Caco-2 (cell line): ENCODE measurements at regions of chr2 and their contacts with region 1.

Region 1: GRCh38 chr2:169452080-169452479 is 27.2 kb upstream of the BBS5 start:
- DNase-seq: peak in 1 of 2 experiments; percentile 47
- H3K4me3 ChIP-seq: no peak overlapping the region
- H3K4me3 Mint-ChIP-seq: no peak overlapping the region
- H3K27ac Mint-ChIP-seq: no peak overlapping the region
- H3K4me1 ChIP-seq: no peaks in the 10 kb centered on the region
- H3K4me1 Mint-ChIP-seq: no peaks in the 10 kb centered on the region
- H3K27me3 ChIP-seq: no peaks in the 10 kb centered on the region
- H3K27me3 Mint-ChIP-seq: no peaks in the 10 kb centered on the region
- CTCF ChIP-seq: peak; percentile 54 to 61

Region 2: DNA sequence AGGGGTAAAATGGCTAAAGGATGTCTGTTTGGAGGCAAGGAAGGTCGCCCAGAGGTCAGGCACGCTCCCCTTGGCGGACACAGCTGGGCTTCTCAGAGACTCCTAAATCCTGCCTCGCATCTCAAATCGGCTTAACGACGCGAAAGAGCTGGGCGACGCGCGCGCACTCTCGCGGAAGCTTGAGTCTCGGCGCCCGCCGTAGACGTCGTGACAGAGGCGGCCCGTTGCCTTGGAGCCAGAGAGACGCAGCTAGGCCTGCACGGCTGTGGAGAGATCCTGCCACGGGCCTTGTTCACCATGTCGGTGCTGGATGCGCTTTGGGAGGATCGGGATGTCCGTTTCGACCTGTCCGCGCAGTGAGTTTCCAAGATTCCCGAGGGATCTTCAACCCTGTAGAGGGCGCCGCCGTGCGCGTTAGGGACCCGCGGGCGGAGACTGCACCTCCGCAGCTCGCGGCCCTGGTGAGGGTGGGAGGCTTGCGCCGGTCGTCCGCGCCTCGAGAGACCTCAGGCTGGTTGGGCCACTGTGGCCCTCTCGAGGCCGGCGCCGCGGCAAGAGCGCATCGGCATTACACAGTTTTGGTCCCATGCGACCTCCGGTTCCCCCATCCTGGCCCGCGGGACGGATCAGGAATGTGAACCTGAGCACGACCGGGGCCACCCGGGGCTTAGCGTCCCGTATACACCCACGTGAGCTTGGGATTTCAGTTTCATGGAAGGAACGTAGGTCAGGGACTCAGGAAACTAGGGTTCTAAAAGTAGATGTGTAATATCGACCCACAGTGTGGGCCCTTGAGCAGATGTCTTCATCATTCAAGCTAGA is 27.4 kb after region 1 on chr2 and contains the start of gene BBS5:
- CTCF ChIA-PET with region 1: no interaction called
- POLR2A ChIA-PET with region 1: no interaction called
- intact Hi-C with region 1: no loop called
- DNase-seq: peak; percentile 77 to 85
- H3K4me3 ChIP-seq: peak within 1 kb of the TSS; percentile 77
- H3K4me3 Mint-ChIP-seq: peak within 1 kb of the TSS; percentile 63
- H3K27ac Mint-ChIP-seq: peak within 1 kb of the TSS; percentile 60
- H3K4me1 ChIP-seq: no peaks in the 10 kb centered on the region; the same call in 1 of the 2 replicates
- H3K4me1 Mint-ChIP-seq: peaks cover 12% of the 10 kb centered on the region
- H3K27me3 ChIP-seq: no peaks in the 10 kb centered on the region
- H3K27me3 Mint-ChIP-seq: no peaks in the 10 kb centered on the region
- CTCF ChIP-seq: peak; percentile 76 to 78
- total RNA-seq, gene BBS5: 2.1 and 3.2 TPM in 2 replicates

Region 3: DNA sequence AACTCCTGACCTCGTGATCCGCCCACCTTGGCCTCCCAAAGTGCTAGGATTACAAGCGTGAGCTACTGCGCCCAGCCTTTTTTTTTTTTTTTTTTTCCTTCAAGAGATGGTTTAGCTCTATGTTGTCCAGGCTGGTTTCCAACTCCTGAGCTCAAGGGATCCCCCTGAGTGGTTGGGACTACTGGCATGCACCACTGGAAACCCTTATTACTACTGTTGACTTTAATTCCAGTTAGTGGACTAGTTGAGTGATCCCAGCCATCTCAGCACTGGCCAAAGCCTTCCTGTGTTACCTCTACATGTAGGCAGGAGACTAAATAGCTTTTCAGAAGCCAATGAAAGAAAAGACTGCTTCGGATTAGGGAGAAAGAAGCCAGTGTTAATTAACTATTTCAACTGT is 338.5 kb after region 1 on chr2:
- CTCF ChIA-PET with region 1: no interaction called
- POLR2A ChIA-PET with region 1: no interaction called
- intact Hi-C with region 1: loop called (anchors 2 kb)
- DNase-seq: no peak
- H3K4me3 ChIP-seq: no peak overlapping the region
- H3K4me3 Mint-ChIP-seq: no peak overlapping the region
- H3K27ac Mint-ChIP-seq: no peak overlapping the region
- H3K4me1 ChIP-seq: no peaks in the 10 kb centered on the region
- H3K4me1 Mint-ChIP-seq: no peaks in the 10 kb centered on the region
- H3K27me3 ChIP-seq: no peaks in the 10 kb centered on the region
- H3K27me3 Mint-ChIP-seq: no peaks in the 10 kb centered on the region
- CTCF ChIP-seq: no peak

Region 4: GRCh38 chr2:169933124-169933711 is 481.1 kb after region 1 on chr2:
- CTCF ChIA-PET with region 1: no interaction called
- POLR2A ChIA-PET with region 1: no interaction called
- intact Hi-C with region 1: loop called (anchors 1 kb)
- DNase-seq: peak in 1 of 2 experiments; percentile 22
- H3K4me3 ChIP-seq: no peak overlapping the region
- H3K4me3 Mint-ChIP-seq: no peak overlapping the region
- H3K27ac Mint-ChIP-seq: no peak overlapping the region
- H3K4me1 ChIP-seq: no peaks in the 10 kb centered on the region
- H3K4me1 Mint-ChIP-seq: no peaks in the 10 kb centered on the region
- H3K27me3 ChIP-seq: no peaks in the 10 kb centered on the region
- H3K27me3 Mint-ChIP-seq: no peaks in the 10 kb centered on the region
- CTCF ChIP-seq: peak; percentile 49 to 70